BJ (cell line): ENCODE measurements at regions of chr17 and their contacts with region 1.

Region 1: GRCh38 chr17:78921437-78921971 is 3.7 kb downstream of the TIMP2 start:
- DNase-seq: no peak
- H3K4me3 ChIP-seq: no peak overlapping the region
- H3K27me3 ChIP-seq: no peaks in the 10 kb centered on the region
- CTCF ChIP-seq: no peak

Region 2: DNA sequence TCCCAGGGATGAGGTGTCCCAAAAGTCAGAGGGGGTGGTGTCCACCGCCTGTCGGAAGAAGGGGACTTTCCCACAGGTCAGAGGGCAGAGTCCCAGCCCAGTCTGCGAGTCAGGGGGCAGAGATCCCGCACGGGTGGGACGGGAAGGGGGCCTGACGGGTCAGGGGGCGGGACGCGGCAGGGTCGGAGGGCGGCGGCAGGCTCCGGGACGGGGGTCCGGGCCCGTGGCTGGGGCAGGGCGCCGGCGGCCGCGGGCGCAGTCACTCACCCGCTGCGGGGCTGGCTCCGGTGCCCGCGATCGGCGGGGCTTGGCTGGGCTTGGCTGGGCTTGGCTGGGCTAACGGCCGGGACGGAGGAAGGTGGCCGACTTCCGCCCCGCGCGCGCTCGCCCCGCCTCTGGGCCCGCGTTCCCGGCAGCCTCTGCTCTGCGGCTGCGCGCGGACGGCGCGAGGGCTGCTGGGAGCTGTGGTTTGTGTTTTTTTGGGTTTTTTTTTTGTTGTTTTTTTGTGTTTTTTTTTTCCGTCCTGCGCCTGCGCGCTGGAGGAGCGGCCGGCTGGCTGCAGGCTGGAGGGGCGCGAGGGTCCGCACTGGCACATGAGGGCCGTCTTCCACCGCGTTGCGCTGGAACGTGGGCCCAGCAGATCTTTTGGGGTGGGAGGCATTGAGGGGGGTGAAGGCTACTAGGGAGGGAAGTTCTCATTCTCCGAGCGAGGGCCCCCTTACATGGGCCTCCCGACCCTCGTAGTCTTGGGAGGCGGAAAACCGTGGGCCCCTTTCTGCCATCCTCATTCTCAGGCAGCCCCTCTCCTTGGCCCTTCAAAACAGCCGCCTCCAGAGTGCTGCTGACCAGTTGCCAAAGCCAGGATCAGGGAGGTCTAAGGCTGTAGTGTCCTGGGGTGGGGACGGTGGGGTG is 88.1 kb after region 1 on chr17 and contains the start of gene CANT1:
- CTCF ChIA-PET with region 1: no interaction called
- POLR2A ChIA-PET with region 1: interaction called, 13 read pairs
- DNase-seq: peak; percentile 33
- H3K4me3 ChIP-seq: peak within 1 kb of the TSS; percentile 87
- H3K27me3 ChIP-seq: no peaks in the 10 kb centered on the region
- CTCF ChIP-seq: no peak
- polyA plus RNA-seq, gene CANT1: 58.7 and 83.5 TPM in 2 replicates